HepG2 (cell line): ENCODE measurements at regions of chr14 and their contacts with region 1.

Region 1: DNA sequence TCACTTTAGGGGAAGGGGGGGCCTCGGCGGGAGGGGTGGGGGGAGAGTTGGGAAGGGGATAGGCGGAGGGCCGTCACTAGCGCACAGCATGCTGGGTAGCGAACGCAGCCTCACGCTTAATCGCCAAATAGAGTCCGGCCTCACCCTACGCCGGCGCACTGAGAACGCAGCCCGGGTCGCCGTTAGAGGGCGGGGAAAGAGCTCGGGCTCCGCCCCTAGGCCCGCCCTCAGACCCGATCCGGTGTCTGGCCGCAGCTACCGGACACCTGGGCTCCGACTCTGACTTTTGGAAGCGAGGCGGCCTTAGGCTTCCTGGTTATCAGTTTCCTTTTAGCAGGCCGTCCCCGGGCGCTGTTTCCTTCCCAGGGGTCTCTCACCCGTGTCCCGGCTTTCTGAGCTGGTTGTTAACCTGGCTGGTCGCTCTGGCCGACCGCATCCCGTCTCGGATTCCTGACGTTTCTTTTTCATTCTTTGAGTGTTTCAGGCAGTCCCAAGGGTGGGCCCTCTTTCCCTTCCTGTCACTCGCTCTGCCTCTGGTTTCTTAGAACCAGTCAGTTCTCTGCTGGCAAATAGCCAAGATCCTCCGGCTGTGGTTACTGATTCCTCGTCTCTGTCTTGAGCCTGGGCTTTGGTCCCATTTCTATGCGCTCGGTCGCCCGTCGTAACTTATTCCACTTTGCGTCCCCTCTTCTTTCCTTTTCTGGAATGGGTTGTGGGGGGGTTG is 378 bp upstream of the STRN3 start:
- DNase-seq: peak; percentile 99
- ATAC-seq: peak; percentile 93
- H3K4me3 ChIP-seq: peak overlapping the region; percentile 96 to 97 (median 96)
- H3K27ac ChIP-seq: peak overlapping the region; percentile 73
- H3K4me1 ChIP-seq: peaks cover 73% of the 10 kb centered on the region
- H3K27me3 ChIP-seq: peaks cover 0 to 5% of the 10 kb centered on the region in 2 experiments; a peak in 1 of 5 replicates
- CTCF ChIP-seq: peak; percentile 16; the same call in 1 of the 2 replicates
- EP300 ChIP-seq: peak in 1 of 2 experiments; percentile 19; a peak in 1 of 4 replicates
- POLR2A ChIP-seq: peak in 1 of 2 experiments; percentile 96; a peak in 2 of 4 replicates
- RAD21 ChIP-seq: peak; percentile 64

Region 2: GRCh38 chr14:30988509-30988908 is 38.0 kb before region 1 on chr14:
- CTCF ChIA-PET with region 1: no interaction called
- POLR2A ChIA-PET with region 1: interaction called, 17 read pairs
- in situ Hi-C with region 1: no loop called
- intact Hi-C with region 1: no loop called
- DNase-seq: peak; percentile 49
- ATAC-seq: peak; percentile 63
- H3K4me3 ChIP-seq: no peak overlapping the region
- H3K27ac ChIP-seq: peak overlapping the region; percentile 30
- H3K4me1 ChIP-seq: peaks cover 31% of the 10 kb centered on the region
- H3K27me3 ChIP-seq: no peaks in the 10 kb centered on the region
- CTCF ChIP-seq: no peak
- EP300 ChIP-seq: no peak
- POLR2A ChIP-seq: no peak
- RAD21 ChIP-seq: no peak

Region 3: DNA sequence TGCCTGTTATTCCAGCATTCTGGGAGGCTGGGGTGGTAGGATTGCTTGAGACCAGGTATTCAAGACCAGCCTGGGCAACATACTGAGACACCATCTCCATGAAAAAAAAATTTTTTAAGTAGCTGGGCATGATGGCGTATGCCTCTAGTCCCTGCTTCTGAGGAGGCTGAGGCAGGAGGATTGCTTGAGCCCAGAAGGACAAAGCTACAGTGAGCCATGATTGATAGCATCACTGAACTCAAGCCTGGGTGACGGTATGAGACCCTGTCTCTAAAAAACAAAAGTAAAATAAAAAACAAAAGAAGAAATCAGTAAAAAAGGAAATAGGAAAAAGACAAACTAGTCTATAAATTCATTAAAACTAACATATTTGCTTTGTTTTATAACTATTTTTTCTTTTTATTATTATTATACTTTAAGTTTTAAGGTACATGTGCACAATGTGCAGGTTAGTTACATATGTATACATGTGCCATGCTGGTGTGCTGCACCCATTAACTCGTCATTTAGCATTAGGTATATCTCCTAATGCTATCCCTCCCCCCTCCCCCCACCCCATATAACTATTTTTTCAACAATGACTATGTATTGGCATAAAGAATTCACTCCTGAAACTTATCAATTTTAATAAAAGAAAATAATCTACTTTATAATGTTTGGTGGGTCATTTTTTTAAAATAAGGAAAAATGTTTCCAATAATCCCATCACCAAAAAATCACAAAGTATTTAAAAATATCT is 16.6 kb before region 1 on chr14:
- CTCF ChIA-PET with region 1: no interaction called
- POLR2A ChIA-PET with region 1: interaction called, 23 read pairs
- in situ Hi-C with region 1: no loop called
- intact Hi-C with region 1: loop called (anchors 2 kb)
- DNase-seq: no peak
- ATAC-seq: no peak
- H3K4me3 ChIP-seq: no peak overlapping the region
- H3K27ac ChIP-seq: no peak overlapping the region
- H3K4me1 ChIP-seq: peaks cover 19% of the 10 kb centered on the region
- H3K27me3 ChIP-seq: no peaks in the 10 kb centered on the region
- CTCF ChIP-seq: no peak
- EP300 ChIP-seq: no peak
- POLR2A ChIP-seq: no peak
- RAD21 ChIP-seq: no peak

Region 4: GRCh38 chr14:31047503-31047902 is 20.9 kb after region 1 on chr14:
- CTCF ChIA-PET with region 1: no interaction called
- POLR2A ChIA-PET with region 1: interaction called, 15 read pairs
- in situ Hi-C with region 1: no loop called
- intact Hi-C with region 1: loop called (anchors 2 kb)
- DNase-seq: no peak
- ATAC-seq: no peak
- H3K4me3 ChIP-seq: no peak overlapping the region
- H3K27ac ChIP-seq: no peak overlapping the region
- H3K4me1 ChIP-seq: peaks cover 15% of the 10 kb centered on the region
- H3K27me3 ChIP-seq: no peaks in the 10 kb centered on the region
- CTCF ChIP-seq: no peak
- EP300 ChIP-seq: no peak
- POLR2A ChIP-seq: no peak
- RAD21 ChIP-seq: no peak

Region 5: GRCh38 chr14:31084385-31084784 is 57.8 kb after region 1 on chr14:
- CTCF ChIA-PET with region 1: interaction called, 3 read pairs
- POLR2A ChIA-PET with region 1: interaction called, 28 read pairs
- in situ Hi-C with region 1: loop called (anchors 10 kb)
- intact Hi-C with region 1: loop called (anchors 1 kb)
- DNase-seq: peak; percentile 42
- ATAC-seq: peak; percentile 77
- H3K4me3 ChIP-seq: no peak overlapping the region
- H3K27ac ChIP-seq: no peak overlapping the region
- H3K4me1 ChIP-seq: 0 out of 2 replicates have a peak, but pooled peaks cover 7% of the 10 kb centered on the region
- H3K27me3 ChIP-seq: no peaks in the 10 kb centered on the region
- CTCF ChIP-seq: peak; percentile 55
- EP300 ChIP-seq: no peak
- POLR2A ChIP-seq: no peak
- RAD21 ChIP-seq: peak; percentile 51

Region 6: GRCh38 chr14:31229638-31230229 is 203.2 kb after region 1 on chr14:
- CTCF ChIA-PET with region 1: no interaction called
- POLR2A ChIA-PET with region 1: interaction called, 10 read pairs
- in situ Hi-C with region 1: no loop called
- intact Hi-C with region 1: no loop called
- DNase-seq: peak; percentile 100
- ATAC-seq: peak; percentile 99
- H3K4me3 ChIP-seq: peak overlapping the region; percentile 0 to 14 (median 1); a peak in 1 of 6 replicates
- H3K27ac ChIP-seq: peak overlapping the region; percentile 72
- H3K4me1 ChIP-seq: peaks cover 62% of the 10 kb centered on the region
- H3K27me3 ChIP-seq: no peaks in the 10 kb centered on the region
- CTCF ChIP-seq: peak; percentile 53
- EP300 ChIP-seq: peak; percentile 100
- POLR2A ChIP-seq: peak; percentile 38 to 66; a peak in 3 of 4 replicates
- RAD21 ChIP-seq: peak; percentile 90